Heart left ventricle (tissue), 16 donors: ENCODE measurements at regions of chr6 and their contacts with region 1.

Region 1: DNA sequence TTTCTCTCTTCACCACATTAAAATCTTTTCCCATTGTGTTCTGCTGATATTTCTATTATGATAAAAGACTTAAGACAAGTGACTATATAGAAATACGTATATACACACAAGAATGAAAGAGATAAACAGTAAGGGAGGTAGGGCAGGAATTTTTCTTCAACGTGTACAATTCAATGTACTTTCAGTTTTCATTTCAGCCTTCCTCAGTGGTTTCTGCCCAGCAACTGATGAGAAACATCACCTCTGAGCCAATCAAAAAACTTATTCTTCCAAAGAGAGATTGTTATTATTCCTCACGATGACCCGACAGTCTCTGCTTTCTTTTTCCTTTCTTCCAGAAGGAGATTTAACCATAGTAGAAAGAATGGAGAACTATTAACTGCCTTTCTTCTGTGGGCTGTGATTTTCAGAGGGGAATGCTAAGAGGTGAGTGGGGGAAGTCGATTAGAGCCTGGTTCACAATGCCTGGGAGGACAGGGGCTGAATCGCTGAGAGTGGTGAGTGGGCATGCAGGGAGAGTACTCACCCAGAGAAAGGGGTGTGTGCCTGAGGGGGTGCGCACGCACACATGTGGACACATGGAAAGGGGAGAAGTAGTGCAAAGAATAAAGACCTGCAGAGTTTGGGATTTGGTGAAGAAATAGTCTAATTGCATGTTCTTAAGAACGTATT is at the start of gene BTN3A1:
- DNase-seq: peak; percentile 54 to 72 (median 66)
- ATAC-seq: peak; percentile 89 to 96 (median 94)
- H3K4me3 ChIP-seq: peak within 1 kb of the TSS; percentile 22 to 78 (median 60)
- H3K27ac ChIP-seq: peak within 1 kb of the TSS; percentile 24 to 93 (median 81)
- H3K4me1 ChIP-seq: peaks cover 0 to 46% (median 11%) of the 10 kb centered on the region in 12 donors
- H3K27me3 ChIP-seq: no peaks in the 10 kb centered on the region
- CTCF ChIP-seq: no peak
- POLR2A ChIP-seq: no peak
- total RNA-seq, gene BTN3A1: 3.1 to 47.6 (median 9.1) TPM

Region 2: GRCh38 chr6:26366504-26366903 is 35.6 kb before region 1 on chr6:
- intact Hi-C with region 1: loop called in 1 of 10 experiments (anchors 1 kb)
- DNase-seq: no peak
- ATAC-seq: no peak
- H3K4me3 ChIP-seq: peak overlapping the region in 7 of 12 donors; percentile 42 to 84 (median 74)
- H3K27ac ChIP-seq: peak overlapping the region in 1 of 12 donors; percentile 96
- H3K4me1 ChIP-seq: peaks cover 0 to 41% (median 15%) of the 10 kb centered on the region in 12 donors
- H3K27me3 ChIP-seq: no peaks in the 10 kb centered on the region
- CTCF ChIP-seq: no peak
- POLR2A ChIP-seq: no peak

Region 3: GRCh38 chr6:26464416-26465131 is 62.5 kb after region 1 on chr6:
- intact Hi-C with region 1: loop called in 2 of 10 experiments (anchors 5 to 10 kb)
- DNase-seq: no peak
- ATAC-seq: no peak
- H3K4me3 ChIP-seq: no peak overlapping the region
- H3K27ac ChIP-seq: no peak overlapping the region
- H3K4me1 ChIP-seq: peaks cover 0 to 39% (median 22%) of the 10 kb centered on the region in 12 donors
- H3K27me3 ChIP-seq: no peaks in the 10 kb centered on the region
- CTCF ChIP-seq: no peak
- POLR2A ChIP-seq: no peak